ENCODE measurements at regions of chr1 and their contacts with region 1.

Region 1: DNA sequence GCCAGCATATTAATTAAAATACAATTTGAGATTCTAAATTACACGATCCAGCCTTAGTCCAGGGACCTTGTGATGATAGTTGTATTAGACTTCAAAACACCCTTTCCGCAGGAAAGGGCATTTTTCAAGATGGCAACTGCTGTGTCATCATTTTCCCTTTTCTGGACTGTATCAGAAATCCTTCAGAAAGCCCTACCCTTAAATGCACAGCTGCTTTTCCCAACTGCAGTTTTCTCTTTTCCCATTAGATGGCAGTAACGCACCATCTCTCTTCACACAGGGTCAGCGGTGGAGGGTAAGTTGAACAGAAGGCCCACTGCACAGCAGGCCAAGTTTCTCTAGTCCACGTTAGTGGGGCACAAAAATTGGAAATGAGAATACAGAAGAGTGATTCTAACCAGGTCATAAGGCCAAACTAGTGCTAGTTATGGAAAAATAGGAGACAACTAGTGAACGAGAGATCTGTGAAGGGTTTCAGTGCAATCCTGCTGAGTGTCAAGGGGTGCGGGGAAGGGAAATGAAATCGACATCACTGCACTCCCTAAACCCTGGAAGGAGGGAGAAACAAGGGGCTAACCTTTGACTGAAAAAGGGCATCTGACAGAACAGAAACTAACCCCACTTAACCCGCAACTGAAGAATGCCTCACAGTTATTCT is 22.1 kb upstream of the TDRD10 start:
- DNase-seq: peak; percentile 65 to 71
- H3K4me3 ChIP-seq: no peak overlapping the region
- H3K27ac ChIP-seq: no peak overlapping the region
- H3K4me1 ChIP-seq: 0 out of 2 replicates have a peak, but pooled peaks cover 12% of the 10 kb centered on the region
- H3K27me3 ChIP-seq: no peaks in the 10 kb centered on the region
- CTCF ChIP-seq: peak; percentile 97

Region 2: DNA sequence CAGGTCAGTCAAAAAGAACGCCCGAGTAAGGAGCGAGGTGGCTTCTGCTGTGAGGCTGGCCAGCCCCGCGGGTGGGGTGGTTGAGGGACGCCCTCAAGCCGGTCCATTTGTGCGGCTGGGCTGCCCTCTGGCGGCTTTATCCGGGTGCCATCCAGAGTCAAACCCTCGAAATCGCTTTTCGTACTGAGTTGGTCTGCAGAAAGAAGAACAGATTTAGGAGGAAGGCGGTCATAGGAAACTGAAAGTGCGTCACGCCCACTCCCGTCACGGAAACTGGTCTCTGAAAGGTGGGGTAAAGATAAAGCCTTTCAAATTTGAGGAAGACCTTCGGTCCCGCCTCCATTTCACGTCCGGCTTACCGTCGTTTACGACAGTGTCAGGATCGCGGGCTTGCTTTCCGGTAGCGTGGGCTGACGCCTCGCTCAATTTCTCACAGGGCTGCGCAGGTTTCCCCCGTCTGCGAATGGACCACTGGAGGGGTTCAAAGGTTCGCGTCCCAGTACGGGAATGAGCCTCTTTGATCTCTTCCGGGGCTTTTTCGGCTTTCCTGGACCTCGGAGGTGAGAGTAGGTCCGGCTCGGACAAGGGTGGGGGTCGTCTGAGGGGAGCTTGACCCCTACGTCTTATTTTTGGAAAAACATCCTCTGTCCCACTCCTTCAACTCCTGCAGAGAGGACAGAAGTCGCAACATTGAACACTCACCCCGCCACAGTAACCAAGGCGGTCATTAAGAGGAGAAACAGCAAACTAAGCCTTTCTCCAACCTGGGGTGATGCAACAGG is 207.5 kb before region 1 on chr1 and contains the start of gene HAX1:
- CTCF ChIA-PET with region 1: no interaction called
- POLR2A ChIA-PET with region 1: no interaction called
- intact Hi-C with region 1: loop called (anchors 2 kb)
- DNase-seq: peak; percentile 87 to 94
- H3K4me3 ChIP-seq: peak within 1 kb of the TSS; percentile 95
- H3K27ac ChIP-seq: peak within 1 kb of the TSS; percentile 78
- H3K4me1 ChIP-seq: peaks cover 10% of the 10 kb centered on the region
- H3K27me3 ChIP-seq: no peaks in the 10 kb centered on the region
- CTCF ChIP-seq: peak; percentile 86
- total RNA-seq, gene HAX1: 89.7 and 92.3 TPM in 2 replicates

Region 3: DNA sequence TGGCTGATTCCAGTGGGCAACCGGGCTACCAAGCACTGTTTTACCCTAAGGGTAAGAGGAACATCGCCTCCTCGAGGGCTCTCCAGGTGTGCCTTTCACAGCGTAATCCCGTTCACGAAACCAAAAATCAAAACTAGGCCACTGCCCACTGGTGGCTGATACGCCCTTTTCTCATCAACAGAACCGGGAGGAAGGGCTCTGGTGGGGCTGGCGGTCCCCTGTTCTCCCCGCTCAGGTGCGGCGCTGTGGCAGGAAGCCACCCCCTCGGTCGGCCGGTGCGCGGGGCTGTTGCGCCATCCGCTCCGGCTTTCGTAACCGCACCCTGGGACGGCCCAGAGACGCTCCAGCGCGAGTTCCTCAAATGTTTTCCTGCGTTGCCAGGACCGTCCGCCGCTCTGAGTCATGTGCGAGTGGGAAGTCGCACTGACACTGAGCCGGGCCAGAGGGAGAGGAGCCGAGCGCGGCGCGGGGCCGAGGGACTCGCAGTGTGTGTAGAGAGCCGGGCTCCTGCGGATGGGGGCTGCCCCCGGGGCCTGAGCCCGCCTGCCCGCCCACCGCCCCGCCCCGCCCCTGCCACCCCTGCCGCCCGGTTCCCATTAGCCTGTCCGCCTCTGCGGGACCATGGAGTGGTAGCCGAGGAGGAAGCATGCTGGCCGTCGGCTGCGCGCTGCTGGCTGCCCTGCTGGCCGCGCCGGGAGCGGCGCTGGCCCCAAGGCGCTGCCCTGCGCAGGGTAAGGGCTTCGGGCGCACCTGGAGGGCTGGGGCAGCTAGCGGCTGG is 74.7 kb before region 1 on chr1 and contains the start of gene IL6R:
- CTCF ChIA-PET with region 1: no interaction called
- POLR2A ChIA-PET with region 1: no interaction called
- intact Hi-C with region 1: loop called (anchors 1 kb)
- DNase-seq: peak; percentile 88
- H3K4me3 ChIP-seq: peak within 1 kb of the TSS; percentile 66
- H3K27ac ChIP-seq: no peak within 1 kb of the TSS
- H3K4me1 ChIP-seq: peaks cover 15% of the 10 kb centered on the region
- H3K27me3 ChIP-seq: 0 out of 2 replicates have a peak, but pooled peaks cover 5% of the 10 kb centered on the region
- CTCF ChIP-seq: 0 out of 2 replicates have a peak, but pooled peaks have one; percentile 29
- total RNA-seq, gene IL6R: 1.5 and 3.2 TPM in 2 replicates

Region 4: GRCh38 chr1:154533952-154534844 is 54.3 kb after region 1 on chr1:
- CTCF ChIA-PET with region 1: interaction called, 19 read pairs
- POLR2A ChIA-PET with region 1: no interaction called
- intact Hi-C with region 1: no loop called
- DNase-seq: peak; percentile 39 to 47
- H3K4me3 ChIP-seq: no peak overlapping the region
- H3K27ac ChIP-seq: no peak overlapping the region
- H3K4me1 ChIP-seq: no peaks in the 10 kb centered on the region
- H3K27me3 ChIP-seq: peaks cover 46% of the 10 kb centered on the region
- CTCF ChIP-seq: peak; percentile 70

Region 5: DNA sequence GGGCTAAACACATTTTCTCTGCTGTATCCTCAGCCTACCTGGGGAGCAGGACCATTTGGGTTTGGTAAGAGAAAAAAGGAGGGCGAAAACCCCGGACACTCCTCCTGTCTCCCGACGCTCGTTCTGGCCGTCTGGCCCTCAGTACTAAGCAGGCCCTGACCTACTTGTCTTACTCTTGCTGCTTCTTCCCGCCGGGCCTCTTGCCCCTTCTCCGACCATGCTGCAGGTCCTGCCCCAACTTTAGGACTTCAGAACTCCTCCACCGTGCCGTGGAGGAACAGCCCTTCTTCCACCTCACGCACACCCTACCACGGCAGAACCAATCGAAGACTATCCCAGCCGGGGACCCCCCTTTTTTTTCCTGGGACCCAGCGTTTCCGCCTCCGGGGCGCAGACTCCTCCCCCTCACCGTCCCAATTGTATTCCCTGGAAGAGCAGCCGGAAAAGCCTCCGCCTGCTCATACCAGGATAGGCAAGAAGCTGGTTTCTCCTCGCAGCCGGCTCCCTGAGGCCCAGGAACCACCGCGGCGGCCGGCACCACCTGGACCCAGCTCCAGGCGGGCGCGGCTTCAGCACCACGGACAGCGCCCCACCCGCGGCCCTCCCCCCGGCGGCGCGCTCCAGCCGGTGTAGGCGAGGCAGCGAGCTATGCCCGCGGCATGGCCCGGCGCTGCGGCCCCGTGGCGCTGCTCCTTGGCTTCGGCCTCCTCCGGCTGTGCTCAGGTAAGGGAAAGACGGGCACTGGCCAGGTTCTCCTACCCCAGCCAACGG is 87.7 kb after region 1 on chr1 and contains the start of gene CHRNB2:
- CTCF ChIA-PET with region 1: no interaction called
- POLR2A ChIA-PET with region 1: no interaction called
- intact Hi-C with region 1: no loop called
- DNase-seq: peak in 1 of 2 experiments; percentile 55
- H3K4me3 ChIP-seq: no peak within 1 kb of the TSS
- H3K27ac ChIP-seq: no peak within 1 kb of the TSS
- H3K4me1 ChIP-seq: no peaks in the 10 kb centered on the region
- H3K27me3 ChIP-seq: peaks cover 77% of the 10 kb centered on the region
- CTCF ChIP-seq: no peak
- total RNA-seq, gene CHRNB2: not detected in 2 replicates

Region 6: GRCh38 chr1:154870115-154870571 is 390.2 kb after region 1 on chr1 and contains the start of gene KCNN3:
- CTCF ChIA-PET with region 1: interaction called, 3 read pairs
- POLR2A ChIA-PET with region 1: no interaction called
- intact Hi-C with region 1: loop called (anchors 10 kb)
- DNase-seq: peak; percentile 42 to 85
- H3K4me3 ChIP-seq: no peak within 1 kb of the TSS
- H3K27ac ChIP-seq: no peak within 1 kb of the TSS
- H3K4me1 ChIP-seq: no peaks in the 10 kb centered on the region
- H3K27me3 ChIP-seq: peaks cover 72% of the 10 kb centered on the region
- CTCF ChIP-seq: no peak
- total RNA-seq, gene KCNN3: 0.33 and 1.1 TPM in 2 replicates